CD4-positive, alpha-beta memory T cell (primary cell): ENCODE measurements at regions of chr9 and their contacts with region 1.

Region 1: DNA sequence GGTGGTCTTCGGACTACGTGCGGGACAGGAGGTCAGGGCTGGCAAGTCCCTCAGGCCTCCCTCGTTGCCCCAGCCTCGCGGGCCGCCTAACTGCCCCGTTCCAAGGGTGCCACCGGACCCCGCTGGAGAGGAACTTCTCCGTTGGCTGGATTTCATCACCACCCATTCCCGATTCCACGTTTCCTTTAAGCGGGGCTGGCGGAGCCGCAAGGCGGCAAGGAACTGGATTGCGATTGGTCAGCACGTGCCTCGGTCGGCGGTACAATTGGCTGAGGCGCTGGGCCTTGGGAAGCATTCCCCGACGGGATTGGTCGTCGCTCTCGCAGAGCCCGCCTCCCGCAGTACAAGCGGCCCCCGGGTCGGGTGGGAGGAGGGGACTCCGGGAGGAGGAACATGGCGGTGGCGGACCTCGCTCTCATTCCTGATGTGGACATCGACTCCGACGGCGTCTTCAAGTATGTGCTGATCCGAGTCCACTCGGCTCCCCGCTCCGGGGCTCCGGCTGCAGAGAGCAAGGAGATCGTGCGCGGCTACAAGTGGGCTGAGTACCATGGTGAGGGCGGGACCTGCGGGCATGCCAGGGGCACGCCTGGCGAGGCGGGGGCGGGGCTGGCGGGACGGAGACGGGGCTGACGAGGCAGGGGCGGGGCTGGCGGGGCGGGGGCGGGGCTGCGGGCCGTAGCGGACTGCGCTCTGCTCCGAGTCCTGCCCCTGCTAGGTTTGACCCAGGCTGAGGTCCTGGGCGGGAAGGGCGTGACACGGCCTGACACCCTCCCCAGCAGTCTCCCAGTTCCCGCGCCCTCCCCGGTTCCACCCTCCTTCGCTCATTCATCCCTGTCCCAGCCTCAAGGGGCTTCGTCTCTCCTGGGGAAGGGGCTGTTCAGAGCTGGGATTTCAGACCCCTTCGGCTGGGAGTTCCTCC is at the start of gene PHPT1:
- DNase-seq: peak; percentile 96 to 99 (median 97)
- H3K4me3 ChIP-seq: peak within 1 kb of the TSS; percentile 54 to 85
- H3K4me3 Mint-ChIP-seq: peak within 1 kb of the TSS; percentile 89 to 94 (median 92)
- H3K27ac ChIP-seq: peak within 1 kb of the TSS; percentile 47
- H3K27ac Mint-ChIP-seq: peak within 1 kb of the TSS; percentile 77 to 96 (median 93)
- H3K4me1 ChIP-seq: peaks cover 26% of the 10 kb centered on the region
- H3K4me1 Mint-ChIP-seq: peaks cover 7 to 27% (median 12%) of the 10 kb centered on the region in 4 donors
- H3K27me3 ChIP-seq: no peaks in the 10 kb centered on the region
- H3K27me3 Mint-ChIP-seq: peaks cover 3 to 10% of the 10 kb centered on the region in 2 donors
- total RNA-seq, gene PHPT1: 41.3 to 42.6 TPM

Region 2: DNA sequence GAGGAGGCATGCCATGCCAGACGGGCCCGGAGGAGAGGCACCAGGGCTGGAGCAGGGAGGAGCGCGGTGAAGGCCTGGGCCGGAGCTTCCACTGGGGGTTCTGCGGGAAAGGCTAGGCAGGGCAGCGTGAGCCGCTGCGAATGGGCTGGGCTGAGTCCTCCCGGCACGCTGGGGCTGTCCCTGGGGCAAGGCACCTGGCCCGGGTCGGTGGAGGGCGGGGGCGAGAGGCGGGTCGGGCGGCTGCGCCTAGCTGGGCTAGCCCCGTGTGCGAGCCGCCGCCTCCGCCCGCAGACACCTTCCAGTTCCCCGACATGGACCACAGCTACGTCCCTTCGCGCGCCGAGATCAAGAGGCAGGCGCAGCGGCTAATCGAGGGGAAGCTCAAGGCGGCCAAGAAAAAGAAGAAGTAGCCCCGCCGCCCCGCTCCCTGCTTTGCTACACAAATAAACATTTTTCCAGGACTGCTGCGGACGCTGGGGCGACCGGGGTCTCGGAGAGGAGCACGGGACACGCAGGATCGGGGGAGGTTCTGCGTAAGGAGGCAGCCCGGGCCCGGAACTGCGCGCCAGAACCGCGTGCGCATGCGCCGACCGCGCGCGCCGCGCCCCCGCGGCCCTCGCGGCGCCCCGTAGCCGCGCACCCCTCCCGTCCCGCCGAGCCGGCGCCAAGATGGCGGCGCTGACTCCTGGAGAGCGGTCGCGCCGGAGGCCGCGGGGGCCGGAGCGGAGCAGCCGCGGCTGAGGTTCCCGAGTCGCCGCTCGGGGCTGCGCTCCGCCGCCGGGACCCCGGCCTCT is 41.8 kb before region 1 on chr9 and contains the start of gene RABL6:
- CTCF ChIA-PET with region 1: no interaction called
- POLR2A ChIA-PET with region 1: interaction called, 10 read pairs
- intact Hi-C with region 1: loop called (anchors 5 kb)
- DNase-seq: peak; percentile 78 to 90 (median 86)
- H3K4me3 ChIP-seq: peak within 1 kb of the TSS; percentile 61 to 74
- H3K4me3 Mint-ChIP-seq: peak within 1 kb of the TSS; percentile 87 to 93 (median 90)
- H3K27ac ChIP-seq: peak within 1 kb of the TSS; percentile 83
- H3K27ac Mint-ChIP-seq: peak within 1 kb of the TSS; percentile 91 to 96 (median 94)
- H3K4me1 ChIP-seq: peaks cover 40% of the 10 kb centered on the region
- H3K4me1 Mint-ChIP-seq: peaks cover 11 to 45% (median 30%) of the 10 kb centered on the region in 4 donors
- H3K27me3 ChIP-seq: no peaks in the 10 kb centered on the region
- H3K27me3 Mint-ChIP-seq: no peaks in the 10 kb centered on the region
- total RNA-seq, gene RABL6: 65.1 to 70.9 TPM

Region 3: DNA sequence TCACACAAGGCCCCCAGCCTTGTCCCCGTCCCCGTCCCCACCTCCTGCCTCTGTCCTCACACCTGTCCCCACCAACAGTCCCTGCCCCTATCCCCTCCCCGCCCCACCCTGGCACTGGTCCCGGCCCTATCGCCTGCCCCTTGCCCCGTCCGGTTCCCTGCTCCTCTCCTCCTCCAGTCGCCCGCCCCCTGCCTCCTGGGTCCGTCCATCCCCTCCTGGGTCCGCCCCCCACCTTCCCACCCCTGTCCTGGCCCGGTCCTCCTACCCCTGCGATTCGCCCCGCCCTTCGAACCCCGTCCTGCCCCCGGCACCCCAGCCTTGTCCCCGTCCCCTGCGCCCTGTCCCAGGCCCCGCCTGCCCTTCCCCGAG is 16.4 kb after region 1 on chr9:
- CTCF ChIA-PET with region 1: interaction called, 6 read pairs
- POLR2A ChIA-PET with region 1: interaction called, 7 read pairs
- intact Hi-C with region 1: loop called (anchors 1 kb)
- DNase-seq: peak in 1 of 5 donors; percentile 50
- H3K4me3 ChIP-seq: peak overlapping the region; percentile 40 to 75
- H3K4me3 Mint-ChIP-seq: peak overlapping the region; percentile 75 to 93 (median 85)
- H3K27ac ChIP-seq: peak overlapping the region; percentile 87
- H3K27ac Mint-ChIP-seq: peak overlapping the region; percentile 75 to 94 (median 85)
- H3K4me1 ChIP-seq: peaks cover 18% of the 10 kb centered on the region
- H3K4me1 Mint-ChIP-seq: peaks cover 4 to 23% (median 11%) of the 10 kb centered on the region in 4 donors
- H3K27me3 ChIP-seq: no peaks in the 10 kb centered on the region
- H3K27me3 Mint-ChIP-seq: no peaks in the 10 kb centered on the region

Region 4: GRCh38 chr9:136885950-136886578 is 36.8 kb after region 1 on chr9 and contains the start of gene TRAF2:
- CTCF ChIA-PET with region 1: interaction called, 21 read pairs
- POLR2A ChIA-PET with region 1: interaction called, 6 read pairs
- intact Hi-C with region 1: loop called (anchors 1 kb)
- DNase-seq: peak; percentile 97
- H3K4me3 ChIP-seq: peak within 1 kb of the TSS; percentile 36 to 82
- H3K4me3 Mint-ChIP-seq: peak within 1 kb of the TSS; percentile 84 to 92 (median 88)
- H3K27ac ChIP-seq: peak within 1 kb of the TSS; percentile 98
- H3K27ac Mint-ChIP-seq: peak within 1 kb of the TSS; percentile 92 to 97 (median 94)
- H3K4me1 ChIP-seq: peaks cover 54% of the 10 kb centered on the region
- H3K4me1 Mint-ChIP-seq: peaks cover 16 to 57% (median 32%) of the 10 kb centered on the region in 4 donors
- H3K27me3 ChIP-seq: no peaks in the 10 kb centered on the region
- H3K27me3 Mint-ChIP-seq: no peaks in the 10 kb centered on the region
- total RNA-seq, gene TRAF2: 40.2 to 43.2 TPM

Region 5: GRCh38 chr9:136902259-136902821 is 53.0 kb after region 1 on chr9:
- CTCF ChIA-PET with region 1: interaction called, 29 read pairs
- POLR2A ChIA-PET with region 1: interaction called, 3 read pairs
- intact Hi-C with region 1: no loop called
- DNase-seq: peak; percentile 78 to 98 (median 84)
- H3K4me3 ChIP-seq: peak overlapping the region; percentile 13 to 53
- H3K4me3 Mint-ChIP-seq: peak overlapping the region; percentile 81 to 90 (median 84)
- H3K27ac ChIP-seq: peak overlapping the region; percentile 96
- H3K27ac Mint-ChIP-seq: peak overlapping the region; percentile 98 to 100 (median 99)
- H3K4me1 ChIP-seq: peaks cover 41% of the 10 kb centered on the region
- H3K4me1 Mint-ChIP-seq: peaks cover 27 to 57% (median 38%) of the 10 kb centered on the region in 4 donors
- H3K27me3 ChIP-seq: no peaks in the 10 kb centered on the region
- H3K27me3 Mint-ChIP-seq: no peaks in the 10 kb centered on the region

Region 6: GRCh38 chr9:137000177-137000883 is 151.0 kb after region 1 on chr9:
- CTCF ChIA-PET with region 1: interaction called, 14 read pairs
- POLR2A ChIA-PET with region 1: interaction called, 5 read pairs
- intact Hi-C with region 1: no loop called
- DNase-seq: peak in 4 of 5 donors; percentile 40 to 53 (median 44)
- H3K4me3 ChIP-seq: no peak overlapping the region
- H3K4me3 Mint-ChIP-seq: peak overlapping the region in 7 of 8 donors; percentile 26 to 81 (median 60)
- H3K27ac ChIP-seq: no peak overlapping the region
- H3K27ac Mint-ChIP-seq: peak overlapping the region; percentile 65 to 92 (median 86)
- H3K4me1 ChIP-seq: peaks cover 45% of the 10 kb centered on the region
- H3K4me1 Mint-ChIP-seq: peaks cover 13 to 50% (median 25%) of the 10 kb centered on the region in 4 donors
- H3K27me3 ChIP-seq: no peaks in the 10 kb centered on the region
- H3K27me3 Mint-ChIP-seq: no peaks in the 10 kb centered on the region